ENCODE measurements at regions of chr19 and their contacts with region 1.

Region 1: DNA sequence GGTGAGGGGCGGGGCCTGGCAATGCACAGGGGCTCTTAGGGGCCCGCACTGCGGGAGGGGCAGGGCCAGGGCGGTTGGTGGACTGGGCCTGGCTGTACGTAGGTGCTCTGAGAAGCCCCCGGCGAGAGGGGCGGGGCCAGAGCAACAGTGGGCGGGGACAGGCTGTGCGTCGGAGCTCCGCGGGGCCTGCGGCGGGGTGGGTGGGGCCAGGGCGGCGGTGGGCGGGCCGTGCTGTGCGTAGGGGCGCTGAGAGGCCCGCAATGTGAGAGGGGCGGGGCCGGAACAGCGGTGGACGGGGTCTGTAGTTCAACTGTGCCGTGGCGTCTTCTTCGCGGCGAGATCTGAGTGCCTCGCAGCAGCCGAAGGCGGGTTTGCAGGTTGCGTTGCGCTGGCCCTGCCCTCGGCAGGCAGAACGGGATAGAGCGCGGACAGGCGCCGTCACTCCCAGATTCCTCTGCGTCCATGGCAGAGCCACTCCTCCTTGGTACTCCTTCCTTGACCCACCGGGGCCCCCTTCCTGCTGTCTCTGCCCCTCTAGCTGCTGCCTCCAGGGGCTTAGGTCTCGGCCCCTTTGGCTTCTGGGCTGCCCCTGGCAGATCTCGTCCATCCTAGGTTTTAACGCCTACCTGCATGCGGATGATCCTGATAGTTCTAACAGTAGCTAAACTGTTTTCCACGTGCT is 33.2 kb downstream of the CCNE1 start:
- DNase-seq: peak; percentile 92 to 99
- ATAC-seq: peak; percentile 78 to 88
- H3K4me3 ChIP-seq: peak overlapping the region; percentile 57
- H3K27ac ChIP-seq: peak overlapping the region; percentile 61 to 84
- H3K4me1 ChIP-seq: peaks cover 20% of the 10 kb centered on the region
- CTCF ChIP-seq: no peak
- EP300 ChIP-seq: no peak
- POLR2A ChIP-seq: peak; percentile 72
- RAD21 ChIP-seq: no peak

Region 2: DNA sequence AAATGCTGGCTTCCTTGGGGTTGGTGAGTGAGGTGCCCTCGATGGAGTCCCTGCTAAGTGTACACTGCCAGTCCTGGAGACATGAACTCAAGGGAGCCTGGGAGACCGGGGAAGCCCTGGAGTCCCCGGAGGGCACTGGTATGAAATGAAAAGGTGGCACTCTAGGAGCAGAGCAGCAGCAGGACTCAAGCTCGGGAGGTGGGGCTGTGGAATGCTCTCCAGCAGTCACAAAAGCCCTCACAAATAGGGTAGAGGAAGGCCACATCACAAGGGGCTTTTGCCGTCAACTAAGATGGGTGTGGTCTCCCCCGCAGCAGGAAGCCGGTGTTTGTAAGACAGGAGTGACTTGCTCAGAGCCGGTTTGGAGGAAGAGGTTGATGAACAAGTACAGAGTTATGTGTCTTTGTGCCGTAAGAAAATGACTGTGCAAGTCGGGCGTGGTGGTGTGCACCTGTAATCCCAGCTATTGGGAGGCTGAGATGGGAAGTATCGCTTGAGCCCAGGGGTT is 13.9 kb before region 1 on chr19:
- CTCF ChIA-PET with region 1: interaction called, 29 read pairs
- POLR2A ChIA-PET with region 1: interaction called, 10 read pairs
- DNase-seq: peak in 1 of 2 experiments; percentile 71
- ATAC-seq: peak; percentile 70
- H3K4me3 ChIP-seq: no peak overlapping the region
- H3K27ac ChIP-seq: 0 out of 6 replicates have a peak overlapping the region, but pooled peaks of 1 of the 2 experiments have one; percentile 2
- H3K4me1 ChIP-seq: peaks cover 12% of the 10 kb centered on the region; the same call in 2 of the 3 replicates
- CTCF ChIP-seq: no peak
- EP300 ChIP-seq: no peak
- POLR2A ChIP-seq: no peak
- RAD21 ChIP-seq: no peak

Region 3: GRCh38 chr19:29941828-29942403 is 96.9 kb after region 1 on chr19 and contains the start of gene URI1:
- CTCF ChIA-PET with region 1: no interaction called
- POLR2A ChIA-PET with region 1: interaction called, 10 read pairs
- DNase-seq: peak; percentile 92 to 96
- ATAC-seq: peak; percentile 89 to 90
- H3K4me3 ChIP-seq: peak within 1 kb of the TSS; percentile 64
- H3K27ac ChIP-seq: peak within 1 kb of the TSS; percentile 79 to 90
- H3K4me1 ChIP-seq: peaks cover 38% of the 10 kb centered on the region
- CTCF ChIP-seq: no peak
- EP300 ChIP-seq: no peak
- POLR2A ChIP-seq: peak; percentile 90
- RAD21 ChIP-seq: no peak
- polyA plus RNA-seq, gene URI1: 157 and 228 TPM in 2 replicates

Region 4: DNA sequence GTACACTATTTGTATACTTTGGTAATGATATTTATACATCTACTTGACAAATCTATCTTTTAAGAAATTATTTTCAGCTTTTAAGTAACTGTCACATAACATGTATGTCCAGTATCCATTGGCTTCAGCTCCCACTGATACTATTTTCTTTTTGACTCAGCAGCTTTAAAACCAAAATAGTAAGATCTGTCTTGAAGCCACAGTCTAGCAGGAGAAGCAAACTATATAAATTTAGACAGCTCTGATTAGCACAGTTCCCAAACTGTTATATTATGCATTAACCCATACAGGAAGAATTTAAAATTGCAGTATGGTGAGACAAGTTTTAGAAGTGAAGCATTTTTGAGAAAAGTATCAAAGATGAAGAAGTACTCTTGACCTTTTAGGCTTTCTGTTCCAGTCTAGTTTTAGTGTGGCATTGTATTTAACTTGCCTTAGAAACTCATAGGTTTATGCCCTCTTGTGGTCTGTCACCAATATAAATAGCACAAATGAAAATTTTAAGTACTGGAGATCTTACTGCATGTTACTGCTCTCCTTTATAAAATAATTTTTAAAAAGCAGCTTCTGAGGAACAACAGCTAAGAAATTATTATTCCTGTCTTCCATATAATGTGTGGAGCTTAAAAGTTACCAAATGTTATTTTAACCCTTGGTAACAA is 121.7 kb after region 1 on chr19:
- CTCF ChIA-PET with region 1: no interaction called
- POLR2A ChIA-PET with region 1: no interaction called
- DNase-seq: peak in 1 of 2 experiments; percentile 57
- ATAC-seq: peak; percentile 75 to 84; a peak in 5 of 6 replicates
- H3K4me3 ChIP-seq: no peak overlapping the region
- H3K27ac ChIP-seq: no peak overlapping the region
- H3K4me1 ChIP-seq: peaks cover 47% of the 10 kb centered on the region
- CTCF ChIP-seq: peak; percentile 66
- EP300 ChIP-seq: no peak
- POLR2A ChIP-seq: no peak
- RAD21 ChIP-seq: peak; percentile 38 to 45; a peak in 4 of 5 replicates